ENCODE measurements at regions of chr4 and their contacts with region 1.

Region 1: GRCh38 chr4:10730590-10730989 is 46.0 kb upstream of the CLNK start:
- DNase-seq: peak; percentile 76
- ATAC-seq: peak; percentile 70
- H3K4me3 ChIP-seq: 0 out of 2 replicates have a peak overlapping the region, but pooled peaks have one; percentile 46
- H3K27ac ChIP-seq: peak overlapping the region; percentile 89
- H3K4me1 ChIP-seq: peaks cover 61% of the 10 kb centered on the region
- H3K27me3 ChIP-seq: no peaks in the 10 kb centered on the region
- CTCF ChIP-seq: no peak
- EP300 ChIP-seq: peak; percentile 82 to 93
- POLR2A ChIP-seq: no peak
- RAD21 ChIP-seq: 0 out of 2 replicates have a peak, but pooled peaks have one; percentile 20

Region 2: GRCh38 chr4:10006231-10006600 is 724.4 kb before region 1 on chr4:
- CTCF ChIA-PET with region 1: no interaction called
- POLR2A ChIA-PET with region 1: interaction called, 3 read pairs
- RAD21 ChIA-PET with region 1: no interaction called
- SMC1A ChIA-PET with region 1: no interaction called
- in situ Hi-C with region 1: no loop called
- intact Hi-C with region 1: loop called (anchors 10 kb)
- DNase-seq: peak; percentile 82
- ATAC-seq: peak; percentile 67
- H3K4me3 ChIP-seq: no peak overlapping the region; the same call in 1 of the 2 replicates
- H3K27ac ChIP-seq: peak overlapping the region; percentile 71
- H3K4me1 ChIP-seq: peaks cover 65% of the 10 kb centered on the region
- H3K27me3 ChIP-seq: no peaks in the 10 kb centered on the region
- CTCF ChIP-seq: no peak
- EP300 ChIP-seq: no peak
- POLR2A ChIP-seq: no peak
- RAD21 ChIP-seq: no peak

Region 3: GRCh38 chr4:10629394-10629793 is 101.2 kb before region 1 on chr4:
- CTCF ChIA-PET with region 1: no interaction called
- POLR2A ChIA-PET with region 1: no interaction called
- RAD21 ChIA-PET with region 1: interaction called, 6 read pairs
- SMC1A ChIA-PET with region 1: interaction called, 4 read pairs
- in situ Hi-C with region 1: no loop called
- intact Hi-C with region 1: loop called (anchors 2 kb)
- DNase-seq: no peak
- ATAC-seq: peak; percentile 89
- H3K4me3 ChIP-seq: no peak overlapping the region
- H3K27ac ChIP-seq: no peak overlapping the region
- H3K4me1 ChIP-seq: peaks cover 4% of the 10 kb centered on the region; the same call in 1 of the 2 replicates
- H3K27me3 ChIP-seq: no peaks in the 10 kb centered on the region
- CTCF ChIP-seq: no peak
- EP300 ChIP-seq: no peak
- POLR2A ChIP-seq: no peak
- RAD21 ChIP-seq: no peak

Region 4: DNA sequence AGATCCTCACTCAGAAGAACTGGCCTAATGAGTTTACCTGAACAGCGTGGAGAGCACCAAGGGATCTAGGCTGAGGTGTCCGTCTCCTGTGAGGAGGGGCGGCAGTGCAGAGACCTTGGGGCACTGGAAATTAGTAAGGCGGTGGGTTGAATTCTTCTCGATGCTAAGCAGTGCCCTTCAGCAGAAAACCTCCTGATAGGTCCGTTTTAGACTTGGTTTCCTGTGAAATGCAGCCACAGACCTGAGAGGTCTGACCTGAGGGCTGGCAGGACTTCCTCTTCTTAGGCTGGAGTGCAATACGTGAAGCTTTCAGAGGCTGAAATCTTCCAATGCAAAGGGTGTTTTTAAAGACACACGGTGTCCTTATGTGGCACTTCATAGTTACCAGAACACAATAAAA is 46.0 kb before region 1 on chr4 and contains the start of gene CLNK:
- CTCF ChIA-PET with region 1: interaction called, 5 read pairs
- POLR2A ChIA-PET with region 1: interaction called, 4 read pairs
- RAD21 ChIA-PET with region 1: interaction called, 13 read pairs
- SMC1A ChIA-PET with region 1: interaction called, 37 read pairs
- in situ Hi-C with region 1: no loop called
- intact Hi-C with region 1: loop called (anchors 1 kb)
- DNase-seq: peak; percentile 77
- ATAC-seq: peak; percentile 77
- H3K4me3 ChIP-seq: peak within 1 kb of the TSS; percentile 52
- H3K27ac ChIP-seq: peak within 1 kb of the TSS; percentile 80
- H3K4me1 ChIP-seq: peaks cover 27% of the 10 kb centered on the region
- H3K27me3 ChIP-seq: no peaks in the 10 kb centered on the region
- CTCF ChIP-seq: no peak
- EP300 ChIP-seq: no peak
- POLR2A ChIP-seq: peak; percentile 52; the same call in 1 of the 2 replicates
- RAD21 ChIP-seq: peak; percentile 23; the same call in 1 of the 2 replicates
- polyA plus RNA-seq, gene CLNK: 2.1 to 2.6 TPM

Region 5: GRCh38 chr4:10743357-10743756 is 12.8 kb after region 1 on chr4:
- CTCF ChIA-PET with region 1: interaction called, 23 read pairs
- POLR2A ChIA-PET with region 1: interaction called, 11 read pairs
- RAD21 ChIA-PET with region 1: interaction called, 48 read pairs
- SMC1A ChIA-PET with region 1: interaction called, 95 read pairs
- in situ Hi-C with region 1: no loop called
- intact Hi-C with region 1: loop called (anchors 1 kb)
- DNase-seq: peak; percentile 91
- ATAC-seq: peak; percentile 80
- H3K4me3 ChIP-seq: peak overlapping the region; percentile 27; the same call in 1 of the 2 replicates
- H3K27ac ChIP-seq: peak overlapping the region; percentile 78
- H3K4me1 ChIP-seq: peaks cover 45% of the 10 kb centered on the region
- H3K27me3 ChIP-seq: no peaks in the 10 kb centered on the region
- CTCF ChIP-seq: no peak
- EP300 ChIP-seq: peak; percentile 75 to 87; a peak in 3 of 4 replicates
- POLR2A ChIP-seq: no peak
- RAD21 ChIP-seq: peak; percentile 17; the same call in 1 of the 2 replicates

Region 6: DNA sequence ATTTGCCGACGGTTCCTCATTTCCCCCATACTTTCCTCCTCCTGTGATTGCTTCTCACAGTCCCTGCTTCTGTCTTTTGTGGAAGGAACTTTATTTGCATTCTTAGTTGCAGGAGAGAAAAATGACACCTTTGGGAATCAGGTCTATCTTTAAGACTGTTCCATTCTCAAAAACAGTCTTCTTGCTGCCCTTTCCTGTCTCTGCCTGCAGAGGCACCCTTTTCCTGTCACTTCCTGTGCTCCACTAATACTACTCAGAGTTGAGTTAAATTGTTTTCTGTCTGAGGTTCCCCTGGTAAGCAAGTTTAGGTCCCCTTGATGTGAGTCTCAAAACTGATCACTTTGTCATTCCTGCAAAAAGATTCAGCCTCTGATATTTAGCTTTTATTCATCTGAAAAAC is 162.8 kb after region 1 on chr4:
- CTCF ChIA-PET with region 1: no interaction called
- POLR2A ChIA-PET with region 1: no interaction called
- RAD21 ChIA-PET with region 1: interaction called, 4 read pairs
- SMC1A ChIA-PET with region 1: interaction called, 4 read pairs
- in situ Hi-C with region 1: no loop called
- intact Hi-C with region 1: loop called (anchors 5 kb)
- DNase-seq: peak; percentile 7
- ATAC-seq: peak; percentile 89
- H3K4me3 ChIP-seq: no peak overlapping the region
- H3K27ac ChIP-seq: no peak overlapping the region
- H3K4me1 ChIP-seq: no peaks in the 10 kb centered on the region
- H3K27me3 ChIP-seq: no peaks in the 10 kb centered on the region
- CTCF ChIP-seq: peak; percentile 38 to 57 (median 56); a peak in 5 of 6 replicates
- EP300 ChIP-seq: no peak
- POLR2A ChIP-seq: no peak
- RAD21 ChIP-seq: peak; percentile 66

Region 7: DNA sequence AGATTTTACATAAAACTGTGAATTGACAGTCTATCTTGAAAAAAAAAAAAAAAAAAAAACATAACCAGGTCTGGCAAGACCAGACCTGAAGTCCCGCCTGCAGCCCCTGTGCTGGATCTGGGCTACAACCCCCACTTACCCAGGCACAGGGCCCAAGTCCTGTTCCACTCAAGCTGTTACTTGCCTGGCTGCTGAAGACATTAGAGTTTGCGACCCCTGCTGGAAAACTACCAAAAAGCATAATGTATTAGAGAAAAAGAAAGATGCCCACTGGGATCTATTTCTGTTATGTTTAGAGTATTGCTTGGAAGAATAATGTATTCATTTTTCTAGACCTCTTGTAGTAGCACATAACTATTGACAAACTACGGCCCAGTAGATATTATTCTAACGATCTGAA is 693.4 kb after region 1 on chr4:
- CTCF ChIA-PET with region 1: no interaction called
- POLR2A ChIA-PET with region 1: no interaction called
- RAD21 ChIA-PET with region 1: no interaction called
- SMC1A ChIA-PET with region 1: no interaction called
- in situ Hi-C with region 1: no loop called
- intact Hi-C with region 1: loop called (anchors 5 kb)
- DNase-seq: no peak
- ATAC-seq: peak; percentile 62
- H3K4me3 ChIP-seq: no peak overlapping the region
- H3K27ac ChIP-seq: no peak overlapping the region
- H3K4me1 ChIP-seq: no peaks in the 10 kb centered on the region
- H3K27me3 ChIP-seq: peaks cover 2 to 8% of the 10 kb centered on the region in 2 experiments
- CTCF ChIP-seq: peak; percentile 37 to 66 (median 56)
- EP300 ChIP-seq: no peak
- POLR2A ChIP-seq: no peak
- RAD21 ChIP-seq: peak; percentile 75